ENCODE measurements at regions of chr4 and their contacts with region 1.

Region 1: DNA sequence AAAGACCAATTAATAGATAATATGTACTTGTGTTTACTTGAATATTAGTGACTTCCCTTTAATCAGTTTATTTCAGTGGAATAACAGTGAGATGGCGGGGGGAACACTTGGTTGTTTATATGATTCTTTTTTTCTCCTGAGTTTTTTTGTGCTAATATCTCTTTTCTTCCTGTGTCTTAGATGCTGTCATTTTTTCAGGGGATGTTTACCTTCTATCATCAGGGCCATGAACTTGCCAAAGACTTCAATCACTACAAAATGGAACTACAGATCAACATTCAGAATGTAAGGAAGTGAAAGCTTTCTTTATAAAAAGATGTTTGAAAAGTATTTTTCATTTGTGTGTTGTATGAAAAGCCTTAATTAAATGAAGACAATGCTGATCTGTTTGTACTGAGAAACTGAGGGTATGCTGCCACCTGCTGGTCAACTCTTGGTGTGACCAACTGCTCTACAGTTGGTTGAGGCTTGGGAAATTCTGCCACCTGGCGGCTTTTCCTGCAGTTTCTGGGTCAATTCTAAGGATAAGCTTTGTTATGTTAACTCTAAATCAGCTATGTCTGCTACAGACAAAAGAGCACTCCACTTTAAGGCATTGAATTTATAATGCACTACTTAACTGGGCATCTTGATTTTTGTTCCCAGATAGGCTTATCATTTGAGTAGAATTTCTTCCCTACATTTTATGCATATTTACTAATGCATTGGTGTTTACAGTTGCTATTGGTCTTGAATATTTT is 134.8 kb downstream of the ARHGAP10 start:
- DNase-seq: peak; percentile 66
- ATAC-seq: peak; percentile 94
- H3K4me3 ChIP-seq: no peak overlapping the region
- H3K27ac ChIP-seq: no peak overlapping the region
- H3K4me1 ChIP-seq: 0 out of 2 replicates have a peak, but pooled peaks cover 2% of the 10 kb centered on the region
- H3K27me3 ChIP-seq: no peaks in the 10 kb centered on the region
- CTCF ChIP-seq: peak; percentile 92 to 100 (median 99); a peak in 5 of 6 replicates
- EP300 ChIP-seq: no peak
- POLR2A ChIP-seq: no peak
- RAD21 ChIP-seq: peak; percentile 100

Region 2: GRCh38 chr4:147518846-147519767 is 347.6 kb before region 1 on chr4:
- CTCF ChIA-PET with region 1: interaction called, 92 read pairs
- POLR2A ChIA-PET with region 1: no interaction called
- RAD21 ChIA-PET with region 1: interaction called, 46 read pairs
- SMC1A ChIA-PET with region 1: interaction called, 43 read pairs
- in situ Hi-C with region 1: loop called (anchors 5 kb)
- intact Hi-C with region 1: loop called (anchors 2 kb)
- DNase-seq: peak; percentile 28
- ATAC-seq: peak; percentile 97
- H3K4me3 ChIP-seq: no peak overlapping the region
- H3K27ac ChIP-seq: no peak overlapping the region
- H3K4me1 ChIP-seq: no peaks in the 10 kb centered on the region
- H3K27me3 ChIP-seq: no peaks in the 10 kb centered on the region; a peak in 1 of 4 replicates
- CTCF ChIP-seq: peak; percentile 93 to 96 (median 93)
- EP300 ChIP-seq: no peak
- POLR2A ChIP-seq: no peak
- RAD21 ChIP-seq: peak; percentile 94

Region 3: GRCh38 chr4:147638942-147639341 is 227.8 kb before region 1 on chr4:
- CTCF ChIA-PET with region 1: interaction called, 9 read pairs
- POLR2A ChIA-PET with region 1: no interaction called
- RAD21 ChIA-PET with region 1: interaction called, 10 read pairs
- SMC1A ChIA-PET with region 1: interaction called, 6 read pairs
- in situ Hi-C with region 1: no loop called
- intact Hi-C with region 1: no loop called
- DNase-seq: peak; percentile 2
- ATAC-seq: peak; percentile 83
- H3K4me3 ChIP-seq: no peak overlapping the region
- H3K27ac ChIP-seq: no peak overlapping the region
- H3K4me1 ChIP-seq: peaks cover 5% of the 10 kb centered on the region; the same call in 1 of the 2 replicates
- H3K27me3 ChIP-seq: no peaks in the 10 kb centered on the region
- CTCF ChIP-seq: no peak
- EP300 ChIP-seq: no peak
- POLR2A ChIP-seq: no peak
- RAD21 ChIP-seq: no peak

Region 4: DNA sequence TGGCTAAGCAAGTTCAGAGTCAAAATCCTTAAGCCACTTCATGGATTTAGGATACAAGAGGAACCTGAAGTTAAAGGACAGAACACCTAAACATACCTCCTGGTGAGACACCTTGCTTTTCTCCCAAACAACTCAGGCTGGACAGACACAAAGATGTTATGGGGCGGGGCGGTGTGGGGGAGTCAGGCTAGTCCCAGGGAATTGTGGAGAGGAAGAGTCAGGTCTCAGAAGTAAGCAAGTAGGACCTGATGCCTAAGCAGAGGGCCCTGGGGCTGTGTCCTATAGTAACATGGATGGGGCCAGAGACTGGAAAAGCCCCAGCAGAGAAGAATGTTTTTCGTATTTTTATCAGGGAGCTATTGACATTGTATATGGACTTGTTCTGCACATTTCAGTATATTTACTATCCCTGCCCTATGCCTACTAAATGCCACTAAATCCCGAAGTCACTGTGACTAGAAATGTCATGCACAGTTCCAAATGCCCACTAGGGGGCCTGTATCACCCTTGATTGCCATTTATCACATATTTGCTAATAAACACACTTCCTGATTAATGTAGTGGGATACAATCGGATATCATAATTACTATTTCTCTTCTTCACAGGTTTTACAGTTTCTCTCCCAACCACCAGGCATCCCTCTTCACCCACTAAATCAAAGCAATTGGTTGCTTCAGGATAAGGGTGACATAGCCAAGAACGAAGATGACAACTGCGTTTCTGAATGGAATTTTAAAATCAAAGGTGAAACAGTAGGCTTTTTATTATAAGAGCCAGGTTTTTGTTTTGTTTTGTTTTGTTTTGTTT is 158.6 kb before region 1 on chr4:
- CTCF ChIA-PET with region 1: interaction called, 343 read pairs
- POLR2A ChIA-PET with region 1: interaction called, 5 read pairs
- RAD21 ChIA-PET with region 1: interaction called, 129 read pairs
- SMC1A ChIA-PET with region 1: interaction called, 251 read pairs
- in situ Hi-C with region 1: loop called (anchors 5 kb)
- intact Hi-C with region 1: loop called (anchors 1 kb)
- DNase-seq: no peak
- ATAC-seq: peak; percentile 82
- H3K4me3 ChIP-seq: no peak overlapping the region
- H3K27ac ChIP-seq: no peak overlapping the region
- H3K4me1 ChIP-seq: peaks cover 3% of the 10 kb centered on the region
- H3K27me3 ChIP-seq: no peaks in the 10 kb centered on the region
- CTCF ChIP-seq: peak; percentile 76 to 92 (median 87)
- EP300 ChIP-seq: no peak
- POLR2A ChIP-seq: no peak
- RAD21 ChIP-seq: peak; percentile 95

Region 5: GRCh38 chr4:147761218-147761883 is 105.4 kb before region 1 on chr4:
- CTCF ChIA-PET with region 1: interaction called, 9 read pairs
- POLR2A ChIA-PET with region 1: no interaction called
- RAD21 ChIA-PET with region 1: interaction called, 4 read pairs
- SMC1A ChIA-PET with region 1: interaction called, 12 read pairs
- in situ Hi-C with region 1: no loop called
- intact Hi-C with region 1: no loop called
- DNase-seq: no peak
- ATAC-seq: peak; percentile 80
- H3K4me3 ChIP-seq: no peak overlapping the region
- H3K27ac ChIP-seq: peak overlapping the region; percentile 14; the same call in 1 of the 2 replicates
- H3K4me1 ChIP-seq: peaks cover 15% of the 10 kb centered on the region
- H3K27me3 ChIP-seq: no peaks in the 10 kb centered on the region
- CTCF ChIP-seq: no peak
- EP300 ChIP-seq: no peak
- POLR2A ChIP-seq: no peak
- RAD21 ChIP-seq: 0 out of 2 replicates have a peak, but pooled peaks have one; percentile 2

Region 6: GRCh38 chr4:147822128-147822527 is 44.6 kb before region 1 on chr4:
- CTCF ChIA-PET with region 1: interaction called, 21 read pairs
- POLR2A ChIA-PET with region 1: no interaction called
- RAD21 ChIA-PET with region 1: interaction called, 3 read pairs
- SMC1A ChIA-PET with region 1: interaction called, 29 read pairs
- in situ Hi-C with region 1: no loop called
- intact Hi-C with region 1: no loop called
- DNase-seq: no peak
- ATAC-seq: no peak; the same call in 2 of the 3 replicates
- H3K4me3 ChIP-seq: no peak overlapping the region
- H3K27ac ChIP-seq: peak overlapping the region; percentile 27; the same call in 1 of the 2 replicates
- H3K4me1 ChIP-seq: peaks cover 9% of the 10 kb centered on the region
- H3K27me3 ChIP-seq: no peaks in the 10 kb centered on the region
- CTCF ChIP-seq: no peak
- EP300 ChIP-seq: no peak
- POLR2A ChIP-seq: no peak
- RAD21 ChIP-seq: no peak

Region 7: GRCh38 chr4:147916351-147916750 is 49.6 kb after region 1 on chr4:
- CTCF ChIA-PET with region 1: interaction called, 10 read pairs
- POLR2A ChIA-PET with region 1: no interaction called
- RAD21 ChIA-PET with region 1: interaction called, 5 read pairs
- SMC1A ChIA-PET with region 1: interaction called, 6 read pairs
- in situ Hi-C with region 1: no loop called
- intact Hi-C with region 1: no loop called
- DNase-seq: no peak
- ATAC-seq: no peak
- H3K4me3 ChIP-seq: no peak overlapping the region
- H3K27ac ChIP-seq: no peak overlapping the region
- H3K4me1 ChIP-seq: no peaks in the 10 kb centered on the region
- H3K27me3 ChIP-seq: no peaks in the 10 kb centered on the region
- CTCF ChIP-seq: no peak
- EP300 ChIP-seq: no peak
- POLR2A ChIP-seq: no peak
- RAD21 ChIP-seq: no peak